ENCODE measurements at regions of chr7 and their contacts with region 1.

Region 1: DNA sequence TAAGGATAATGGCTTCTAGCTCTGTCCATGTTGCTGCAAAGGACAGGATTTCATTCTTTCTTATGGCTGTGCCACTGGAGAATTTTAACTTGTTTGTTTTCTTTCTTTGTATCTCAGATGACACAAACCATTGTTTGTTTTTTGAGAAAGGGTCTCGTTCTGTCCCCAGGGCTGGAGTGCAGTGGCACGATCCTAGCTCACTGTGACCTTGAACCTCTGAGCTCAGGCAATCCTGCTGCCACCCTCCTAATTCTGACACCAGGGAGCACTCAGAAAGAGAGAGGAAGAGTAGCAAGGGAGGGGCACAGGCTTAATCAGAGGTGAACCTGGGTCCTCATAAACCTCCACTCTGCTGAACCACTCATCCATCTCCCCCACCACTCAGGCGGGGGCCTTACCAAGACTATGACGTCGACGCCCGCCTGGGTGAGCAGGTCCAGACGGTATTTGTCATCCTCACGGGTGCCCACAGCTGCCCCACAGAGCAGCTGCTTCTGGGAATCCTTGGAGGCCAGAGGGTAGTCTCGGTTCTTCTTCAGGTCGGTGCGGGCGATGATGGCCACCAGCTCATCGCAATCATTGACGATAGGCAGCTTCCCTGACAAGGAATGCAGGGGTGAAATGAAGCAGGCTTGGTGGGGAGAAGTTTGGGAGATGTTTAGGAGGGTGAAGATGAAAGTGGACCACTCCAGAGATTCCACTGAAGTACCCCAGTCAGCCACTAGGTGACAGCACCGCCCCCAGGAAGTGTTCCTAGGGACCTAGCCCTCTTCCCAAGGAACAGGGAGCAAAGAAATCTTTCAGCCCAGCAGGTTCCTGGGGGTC is 11.6 kb downstream of the IMPDH1 start:
- DNase-seq: peak; percentile 56 to 64
- ATAC-seq: peak in 7 of 8 donors; percentile 26 to 73 (median 65)
- H3K4me3 ChIP-seq: no peak overlapping the region
- H3K27ac ChIP-seq: no peak overlapping the region
- H3K4me1 ChIP-seq: no peaks in the 10 kb centered on the region
- H3K27me3 ChIP-seq: no peaks in the 10 kb centered on the region
- CTCF ChIP-seq: peak; percentile 86 to 97 (median 94)

Region 2: DNA sequence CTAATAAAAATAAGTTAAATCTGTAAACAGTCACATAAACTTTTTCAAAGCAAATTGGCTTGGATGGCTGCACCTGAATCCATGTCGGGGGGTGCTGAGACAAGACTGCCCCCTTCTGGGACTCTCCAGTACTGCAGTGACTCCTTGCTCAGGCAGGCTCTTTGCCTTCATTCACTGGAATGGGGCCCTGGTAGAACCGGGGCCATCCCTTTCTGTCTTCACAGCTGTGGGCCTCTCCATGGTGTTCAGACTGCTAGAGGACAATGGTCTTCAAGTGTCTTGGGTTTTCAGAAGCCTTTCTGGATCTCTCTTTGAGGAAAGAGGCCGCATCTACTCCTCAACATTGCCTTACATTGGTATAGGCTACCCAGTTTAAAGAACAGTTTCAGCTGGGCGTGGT is 27.6 kb after region 1 on chr7:
- intact Hi-C with region 1: loop called in 7 of 10 experiments (anchors 1 to 2 kb)
- DNase-seq: peak; percentile 59 to 66
- ATAC-seq: peak in 6 of 8 donors; percentile 47 to 71 (median 54)
- H3K4me3 ChIP-seq: no peak overlapping the region
- H3K27ac ChIP-seq: no peak overlapping the region
- H3K4me1 ChIP-seq: peaks cover 0 to 23% (median 4%) of the 10 kb centered on the region in 9 donors
- H3K27me3 ChIP-seq: no peaks in the 10 kb centered on the region
- CTCF ChIP-seq: peak; percentile 67 to 93 (median 88)

Region 3: DNA sequence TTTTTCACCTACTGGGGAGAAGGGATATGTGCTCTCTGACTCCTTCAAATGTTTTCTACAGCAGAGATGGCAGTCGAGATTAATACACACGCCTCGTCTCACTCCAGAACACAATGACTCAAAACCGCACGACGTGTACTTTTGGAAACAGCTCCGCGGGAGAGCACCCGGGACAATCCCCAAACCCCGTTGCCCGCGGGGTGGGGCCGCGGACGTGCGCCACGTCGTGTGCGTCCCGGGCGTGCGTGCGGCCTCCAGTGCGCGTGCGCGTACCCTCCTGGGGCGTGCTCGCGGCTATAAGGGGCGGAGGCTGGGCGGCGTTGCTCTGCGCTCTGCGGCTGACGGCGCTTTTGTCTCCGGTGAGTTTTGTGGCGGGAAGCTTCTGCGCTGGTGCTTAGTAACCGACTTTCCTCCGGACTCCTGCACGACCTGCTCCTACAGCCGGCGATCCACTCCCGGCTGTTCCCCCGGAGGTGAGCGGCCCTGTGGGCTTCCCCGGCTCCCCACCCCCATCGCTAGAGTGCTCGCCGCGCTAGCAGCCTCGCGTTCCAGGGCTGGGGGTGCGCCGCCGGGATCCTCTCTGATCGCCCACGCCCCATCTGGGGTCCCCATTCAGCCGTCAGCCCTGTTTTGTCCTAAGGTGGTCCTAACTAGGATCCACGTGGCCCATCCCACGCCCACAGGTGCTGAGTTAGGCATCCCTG is 57.5 kb after region 1 on chr7 and contains the start of gene HILPDA:
- intact Hi-C with region 1: loop called in 4 of 10 experiments (anchors 1 to 2 kb)
- DNase-seq: peak; percentile 92 to 96
- ATAC-seq: peak; percentile 93 to 97 (median 96)
- H3K4me3 ChIP-seq: peak within 1 kb of the TSS; percentile 69 to 97 (median 84)
- H3K27ac ChIP-seq: peak within 1 kb of the TSS; percentile 86 to 98 (median 94)
- H3K4me1 ChIP-seq: peaks cover 9 to 62% (median 41%) of the 10 kb centered on the region in 9 donors
- H3K27me3 ChIP-seq: no peaks in the 10 kb centered on the region
- CTCF ChIP-seq: no peak
- total RNA-seq, gene HILPDA: 4.5 to 65.0 (median 6.7) TPM

Measured in heart right ventricle (tissue), 16 donors.